Calu3 (cell line): ENCODE measurements at regions of chr10 and their contacts with region 1.

Region 1: GRCh38 chr10:97407211-97407951 is 6.2 kb upstream of the RRP12 start:
- DNase-seq: peak; percentile 44
- H3K4me3 Mint-ChIP-seq: no peak overlapping the region
- H3K27ac Mint-ChIP-seq: no peak overlapping the region
- H3K4me1 Mint-ChIP-seq: no peaks in the 10 kb centered on the region
- H3K27me3 Mint-ChIP-seq: no peaks in the 10 kb centered on the region
- CTCF ChIP-seq: peak; percentile 58

Region 2: DNA sequence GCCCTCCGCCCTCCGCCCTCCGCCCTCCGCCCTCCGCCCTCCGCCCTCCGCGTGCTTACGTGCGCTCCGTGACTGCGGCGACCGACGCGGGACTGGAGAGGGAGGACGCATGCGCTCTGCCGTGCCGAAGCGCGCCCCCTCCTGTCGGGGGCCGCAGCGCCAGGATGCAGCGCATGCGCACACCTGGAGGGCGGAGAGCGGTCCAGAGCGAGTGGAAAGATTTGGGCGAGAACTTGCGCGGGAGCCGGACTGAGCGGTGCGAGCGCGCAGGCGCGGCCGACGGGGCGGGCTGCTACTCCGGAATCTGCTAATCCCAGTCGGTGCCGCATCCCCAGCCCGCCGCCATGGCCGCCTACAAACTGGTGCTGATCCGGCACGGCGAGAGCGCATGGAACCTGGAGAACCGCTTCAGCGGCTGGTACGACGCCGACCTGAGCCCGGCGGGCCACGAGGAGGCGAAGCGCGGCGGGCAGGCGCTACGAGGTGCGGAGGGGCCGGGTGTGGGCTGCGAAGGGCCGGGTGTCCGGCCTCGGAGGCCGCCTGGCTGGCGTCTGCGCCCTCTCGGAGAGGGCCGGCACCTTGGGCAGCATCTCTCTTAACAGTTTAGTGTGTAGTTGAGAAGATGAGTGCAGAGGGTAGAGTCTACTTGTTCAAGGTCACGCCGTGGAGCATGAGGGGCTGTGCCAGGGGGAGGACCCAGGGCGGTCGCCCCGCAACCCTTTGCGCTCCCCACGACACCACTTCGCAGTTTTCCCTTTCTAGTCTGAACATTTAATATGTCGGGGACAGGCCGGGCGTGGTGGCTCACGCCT is 18.8 kb after region 1 on chr10 and contains the start of gene PGAM1:
- CTCF ChIA-PET with region 1: no interaction called
- intact Hi-C with region 1: loop called (anchors 2 kb)
- DNase-seq: peak; percentile 93
- H3K4me3 Mint-ChIP-seq: peak within 1 kb of the TSS; percentile 86
- H3K27ac Mint-ChIP-seq: peak within 1 kb of the TSS; percentile 83
- H3K4me1 Mint-ChIP-seq: no peaks in the 10 kb centered on the region
- H3K27me3 Mint-ChIP-seq: no peaks in the 10 kb centered on the region
- CTCF ChIP-seq: peak; percentile 41
- total RNA-seq, gene PGAM1: 148 and 157 TPM in 2 replicates

Region 3: GRCh38 chr10:97445722-97446639 is 38.6 kb after region 1 on chr10 and contains the starts of genes EXOSC1 and ZDHHC16:
- CTCF ChIA-PET with region 1: no interaction called
- intact Hi-C with region 1: loop called (anchors 1 kb)
- DNase-seq: peak; percentile 82
- H3K4me3 Mint-ChIP-seq: peak within 1 kb of the TSS; percentile 98
- H3K27ac Mint-ChIP-seq: peak within 1 kb of the TSS; percentile 67
- H3K4me1 Mint-ChIP-seq: peaks cover 15% of the 10 kb centered on the region
- H3K27me3 Mint-ChIP-seq: no peaks in the 10 kb centered on the region
- CTCF ChIP-seq: no peak
- total RNA-seq, gene EXOSC1: 28.6 and 29.5 TPM in 2 replicates
- total RNA-seq, gene ZDHHC16: 25.7 and 27.7 TPM in 2 replicates

Region 4: GRCh38 chr10:97518301-97519043 is 111.1 kb after region 1 on chr10:
- CTCF ChIA-PET with region 1: no interaction called
- intact Hi-C with region 1: no loop called
- DNase-seq: peak; percentile 41
- H3K4me3 Mint-ChIP-seq: no peak overlapping the region
- H3K27ac Mint-ChIP-seq: no peak overlapping the region
- H3K4me1 Mint-ChIP-seq: peaks cover 34% of the 10 kb centered on the region
- H3K27me3 Mint-ChIP-seq: no peaks in the 10 kb centered on the region
- CTCF ChIP-seq: no peak